Caco-2 (cell line): ENCODE measurements at regions of chr5 and their contacts with region 1.

Region 1: DNA sequence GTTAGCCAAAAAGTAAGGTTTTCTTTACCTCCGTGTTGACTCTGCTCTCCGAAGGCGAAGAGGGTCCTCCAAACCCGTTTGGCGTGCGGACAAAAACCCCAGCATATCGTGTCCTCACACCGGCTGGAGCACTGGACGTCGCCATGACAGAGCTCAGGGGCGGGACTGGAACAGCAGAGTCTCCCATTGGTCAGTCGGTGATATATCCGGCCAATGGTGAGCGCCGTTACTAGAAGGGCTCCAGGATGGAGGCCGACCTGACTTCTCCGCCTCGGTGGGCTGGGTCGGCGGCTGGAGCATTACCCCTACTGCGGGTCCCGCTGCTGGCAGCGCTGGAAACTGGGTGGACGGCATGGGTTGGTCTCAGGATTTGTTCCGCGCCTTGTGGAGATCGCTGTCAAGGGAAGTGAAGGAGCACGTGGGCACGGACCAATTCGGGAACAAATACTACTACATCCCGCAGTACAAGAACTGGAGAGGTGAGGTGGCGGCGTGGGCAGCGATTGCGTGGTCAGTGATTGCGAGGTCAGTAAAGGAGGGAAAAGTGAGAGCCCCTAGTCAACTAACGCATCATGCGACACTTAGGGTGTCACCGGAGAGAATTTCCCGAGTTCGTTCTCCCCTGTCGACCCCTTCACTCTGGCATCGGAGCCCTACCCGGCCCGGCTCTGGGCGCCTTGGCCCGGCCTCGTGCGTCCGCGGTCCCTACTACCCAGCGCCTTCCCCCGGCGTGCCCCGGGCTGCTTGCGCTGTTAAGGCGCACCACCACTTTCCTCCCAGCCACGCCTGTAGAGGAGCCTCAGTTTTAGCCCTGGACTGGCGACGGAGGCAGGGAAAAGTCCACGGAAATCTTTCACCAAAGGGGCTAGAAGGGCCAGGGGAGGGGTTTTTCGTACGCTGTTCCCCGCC is at the starts of genes ERCC8 and NDUFAF2:
- DNase-seq: peak; percentile 93 to 94
- H3K4me3 ChIP-seq: peak within 1 kb of the TSS; percentile 42
- H3K4me3 Mint-ChIP-seq: no peak within 1 kb of the TSS
- H3K27ac Mint-ChIP-seq: no peak within 1 kb of the TSS
- H3K4me1 ChIP-seq: peaks cover 6% of the 10 kb centered on the region; the same call in 1 of the 2 replicates
- H3K4me1 Mint-ChIP-seq: no peaks in the 10 kb centered on the region
- H3K27me3 ChIP-seq: no peaks in the 10 kb centered on the region
- H3K27me3 Mint-ChIP-seq: no peaks in the 10 kb centered on the region
- CTCF ChIP-seq: no peak
- total RNA-seq, gene ERCC8: 18.3 and 19.8 TPM in 2 replicates
- total RNA-seq, gene NDUFAF2: 57.9 and 60.8 TPM in 2 replicates

Region 2: DNA sequence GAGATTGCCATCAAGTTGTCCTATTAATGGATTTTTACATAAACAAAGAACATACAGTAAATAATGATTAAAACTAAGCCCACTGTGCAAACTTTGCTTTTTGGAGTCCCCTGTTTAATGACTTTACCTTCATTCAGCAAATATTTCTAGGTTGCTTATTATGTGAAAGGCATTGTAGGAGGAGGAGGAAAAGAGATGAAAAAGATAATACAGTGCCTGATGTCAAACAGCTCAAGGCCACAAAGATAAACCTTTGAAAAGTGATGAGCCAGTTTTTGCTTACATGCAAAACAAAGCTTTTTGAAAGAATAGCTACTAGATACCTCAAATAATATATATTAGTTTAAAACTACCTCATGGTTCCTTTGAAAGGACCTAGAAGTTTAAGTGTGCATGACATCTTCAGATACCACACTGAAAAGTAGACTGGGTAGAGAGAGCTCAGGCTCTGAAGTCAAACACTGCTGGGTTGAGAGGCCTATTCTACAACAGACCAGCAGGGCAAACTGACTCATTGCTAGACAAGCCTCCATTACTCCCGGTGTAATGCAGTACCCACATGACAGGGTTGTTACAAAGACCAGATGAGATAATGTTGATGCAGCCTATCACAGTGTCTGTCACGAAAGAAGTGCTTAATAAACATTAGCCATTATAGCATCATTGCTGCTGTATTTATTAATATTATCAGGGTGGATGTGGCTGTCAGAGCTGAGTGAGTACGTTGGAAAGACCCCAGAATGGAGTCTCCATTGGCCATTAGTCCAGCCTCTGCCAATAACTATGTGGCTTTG is 257.0 kb before region 1 on chr5:
- CTCF ChIA-PET with region 1: interaction called, 4 read pairs
- POLR2A ChIA-PET with region 1: no interaction called
- intact Hi-C with region 1: loop called (anchors 5 kb)
- DNase-seq: peak; percentile 65 to 67
- H3K4me3 ChIP-seq: no peak overlapping the region
- H3K4me3 Mint-ChIP-seq: no peak overlapping the region
- H3K27ac Mint-ChIP-seq: peak overlapping the region; percentile 53
- H3K4me1 ChIP-seq: peaks cover 36% of the 10 kb centered on the region
- H3K4me1 Mint-ChIP-seq: peaks cover 47% of the 10 kb centered on the region
- H3K27me3 ChIP-seq: no peaks in the 10 kb centered on the region
- H3K27me3 Mint-ChIP-seq: no peaks in the 10 kb centered on the region
- CTCF ChIP-seq: peak; percentile 41 to 57

Region 3: DNA sequence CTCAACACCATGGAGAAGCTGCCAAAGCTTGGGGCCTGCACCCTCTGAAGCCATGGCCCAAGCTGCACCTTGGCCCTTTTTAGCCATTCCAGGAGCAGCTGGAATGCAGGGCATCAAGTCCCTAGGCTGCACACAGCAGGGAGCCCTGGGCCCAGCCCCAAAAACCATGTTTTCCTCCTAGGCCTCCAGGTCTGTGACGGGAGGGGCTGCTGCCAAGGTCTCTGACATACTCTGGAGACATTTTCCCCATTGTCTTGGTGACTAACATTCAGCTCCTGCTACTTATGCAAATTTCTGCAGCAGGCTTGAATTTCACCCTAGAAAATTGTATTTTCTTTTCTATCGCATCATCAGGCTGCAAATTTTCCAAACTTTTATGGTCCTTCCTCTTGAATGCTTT is 165.7 kb before region 1 on chr5:
- CTCF ChIA-PET with region 1: no interaction called
- POLR2A ChIA-PET with region 1: no interaction called
- intact Hi-C with region 1: no loop called
- DNase-seq: no peak
- H3K4me3 ChIP-seq: no peak overlapping the region
- H3K4me3 Mint-ChIP-seq: no peak overlapping the region
- H3K27ac Mint-ChIP-seq: no peak overlapping the region
- H3K4me1 ChIP-seq: no peaks in the 10 kb centered on the region
- H3K4me1 Mint-ChIP-seq: no peaks in the 10 kb centered on the region
- H3K27me3 ChIP-seq: no peaks in the 10 kb centered on the region
- H3K27me3 Mint-ChIP-seq: no peaks in the 10 kb centered on the region
- CTCF ChIP-seq: no peak